Heart right ventricle (tissue), 16 donors: ENCODE measurements at regions of chr21 and their contacts with region 1.

Region 1: DNA sequence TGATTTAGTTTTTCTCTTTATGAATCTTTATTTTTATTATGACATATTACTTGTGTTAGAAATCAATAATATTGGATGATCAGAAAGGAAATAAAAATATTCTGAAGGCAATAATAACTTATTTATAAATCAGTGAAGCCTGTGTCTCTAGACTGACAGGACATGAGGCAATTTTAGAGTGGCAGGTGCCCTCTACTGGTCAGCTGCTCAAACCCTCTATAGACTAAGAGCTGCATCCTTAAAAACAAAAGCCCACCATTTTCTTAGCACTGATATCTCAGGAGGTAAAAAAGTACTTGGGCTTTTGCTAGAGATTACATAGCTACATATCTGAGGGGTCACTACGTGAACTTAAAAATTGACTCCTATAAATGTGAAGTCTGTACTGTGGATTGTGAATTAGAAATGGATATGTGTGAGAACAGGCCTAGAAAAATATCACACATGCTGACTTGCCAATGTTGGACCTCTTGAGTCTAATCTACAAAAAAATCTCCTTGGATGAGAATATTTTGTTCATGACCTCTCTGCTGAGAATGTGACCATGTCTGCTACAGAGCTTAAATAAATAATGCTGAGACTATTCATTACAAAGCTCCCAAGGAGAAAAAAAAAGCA is 597.9 kb upstream of the ADAMTS5 start:
- DNase-seq: peak; percentile 17 to 43
- ATAC-seq: peak in 7 of 8 donors; percentile 67 to 82 (median 76)
- H3K4me3 ChIP-seq: no peak overlapping the region
- H3K27ac ChIP-seq: no peak overlapping the region
- H3K4me1 ChIP-seq: peaks cover 0 to 5% (median under 1%) of the 10 kb centered on the region in 9 donors
- H3K27me3 ChIP-seq: no peaks in the 10 kb centered on the region
- CTCF ChIP-seq: peak; percentile 54 to 87 (median 82)

Region 2: DNA sequence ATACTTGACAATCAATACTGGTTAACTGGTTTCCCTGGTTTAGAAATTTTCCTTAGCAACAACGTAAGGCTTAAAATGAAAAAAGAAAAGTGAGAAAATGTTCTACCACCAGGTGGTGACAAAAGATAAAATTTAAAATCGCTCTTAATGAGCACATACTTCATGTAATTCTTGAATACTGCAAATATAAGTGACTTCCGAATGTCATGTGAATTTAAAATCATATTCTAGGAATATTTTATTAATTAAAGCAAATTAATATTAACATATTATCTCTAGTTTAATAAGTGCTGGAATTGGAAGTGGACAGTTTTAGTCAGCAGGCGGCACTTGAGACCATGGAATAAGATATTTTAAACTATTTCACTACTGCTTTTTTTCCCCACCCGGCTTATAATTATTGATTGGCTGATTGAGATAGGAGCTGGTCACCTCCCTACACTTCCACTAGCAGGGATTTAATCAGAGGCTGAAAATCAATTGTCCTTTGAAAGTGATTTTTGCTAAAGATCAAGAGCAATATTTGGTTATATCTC is 714.6 kb before region 1 on chr21:
- intact Hi-C with region 1: loop called in 7 of 10 experiments (anchors 2 to 10 kb)
- DNase-seq: no peak
- ATAC-seq: no peak
- H3K4me3 ChIP-seq: peak overlapping the region in 6 of 10 donors; percentile 4 to 18 (median 8)
- H3K27ac ChIP-seq: no peak overlapping the region
- H3K4me1 ChIP-seq: peaks cover 0 to 33% (median 21%) of the 10 kb centered on the region in 9 donors
- H3K27me3 ChIP-seq: peaks cover 0 to 31% (median 0%) of the 10 kb centered on the region in 7 donors
- CTCF ChIP-seq: peak; percentile 56 to 84 (median 71)

Region 3: DNA sequence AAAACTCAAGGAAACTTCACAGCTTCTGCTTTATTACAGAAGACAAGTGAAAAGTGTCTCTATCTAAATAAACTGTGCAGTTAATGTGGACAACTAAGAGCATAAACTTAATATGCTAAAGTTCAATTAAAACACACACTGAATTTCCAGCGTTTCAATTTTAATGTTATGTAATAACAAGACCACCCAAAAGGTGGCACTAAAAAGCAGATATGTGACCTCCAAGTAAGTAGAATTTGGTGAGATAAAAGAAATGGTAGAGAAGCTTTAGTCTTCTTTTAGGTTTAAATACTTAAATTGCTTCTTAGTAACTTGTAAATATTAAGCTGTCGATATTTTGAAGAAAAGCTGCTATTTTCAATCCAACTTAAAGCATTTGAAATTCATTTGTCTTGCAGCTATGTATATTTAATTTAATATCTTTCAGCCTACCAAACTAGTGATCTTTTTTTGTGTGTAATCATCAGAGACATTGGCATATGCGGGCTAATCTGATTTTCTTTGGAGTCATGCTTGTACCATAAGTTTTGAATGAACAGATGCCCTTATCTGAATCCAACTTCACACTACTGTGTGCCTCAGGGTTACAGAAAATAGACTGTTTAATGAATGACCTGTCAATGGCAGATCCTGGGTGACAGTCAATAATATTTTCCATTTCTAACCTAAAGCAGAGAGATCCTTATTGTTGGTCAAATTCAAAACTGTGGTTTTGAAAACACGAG is 683.1 kb before region 1 on chr21:
- intact Hi-C with region 1: loop called in 6 of 10 experiments (anchors 2 to 10 kb)
- DNase-seq: no peak
- ATAC-seq: no peak
- H3K4me3 ChIP-seq: no peak overlapping the region
- H3K27ac ChIP-seq: no peak overlapping the region
- H3K4me1 ChIP-seq: no peaks in the 10 kb centered on the region
- H3K27me3 ChIP-seq: no peaks in the 10 kb centered on the region
- CTCF ChIP-seq: peak; percentile 15 to 61 (median 47)

Region 4: DNA sequence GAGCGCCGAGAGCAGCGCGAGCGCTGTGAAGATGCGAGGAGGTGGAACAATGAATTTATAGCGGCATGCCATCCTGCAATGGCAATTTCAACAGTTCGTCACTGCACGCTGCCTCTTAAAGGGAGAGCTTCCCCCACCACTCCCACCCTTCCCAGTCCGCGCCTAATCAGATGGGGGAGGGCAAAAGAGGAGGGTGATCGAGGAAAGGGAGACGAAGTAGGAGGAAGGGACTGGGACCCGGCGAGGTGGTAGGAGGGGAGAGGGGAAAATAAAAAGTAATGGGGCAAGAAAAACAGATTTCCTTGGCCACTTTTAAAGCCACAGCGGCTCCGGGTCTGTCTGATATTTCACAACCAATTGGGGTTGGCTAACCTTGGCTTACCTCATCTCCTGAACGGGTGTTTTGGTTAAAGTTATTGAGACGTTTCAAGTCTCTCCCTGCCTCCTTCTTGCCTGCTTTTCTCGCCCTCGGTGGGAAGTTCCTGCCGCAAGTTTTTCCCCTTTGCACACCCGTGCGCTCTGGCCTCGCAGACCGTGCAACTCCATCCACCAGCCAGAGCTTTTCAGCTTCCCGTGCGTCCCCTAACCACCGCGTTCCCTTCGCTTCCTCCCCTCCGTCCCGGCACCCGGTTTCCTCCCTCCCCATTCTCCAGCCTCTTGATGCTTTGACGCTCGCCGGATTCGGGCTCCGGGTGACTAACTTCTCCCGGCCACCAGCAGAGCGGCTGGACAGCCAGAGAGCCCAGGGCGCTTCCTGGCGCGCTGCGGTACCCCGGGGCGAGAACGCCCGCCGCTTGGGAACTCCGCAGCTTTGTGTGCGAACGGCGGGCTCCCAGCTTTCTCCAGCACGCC is 597.5 kb before region 1 on chr21 and contains the start of gene ADAMTS5:
- intact Hi-C with region 1: loop called in 2 of 10 experiments (anchors 10 kb)
- DNase-seq: peak; percentile 35 to 55
- ATAC-seq: peak; percentile 19 to 70 (median 61)
- H3K4me3 ChIP-seq: peak within 1 kb of the TSS; percentile 53 to 76 (median 64)
- H3K27ac ChIP-seq: peak within 1 kb of the TSS; percentile 58 to 82 (median 74)
- H3K4me1 ChIP-seq: peaks cover 0 to 33% (median 15%) of the 10 kb centered on the region in 9 donors
- H3K27me3 ChIP-seq: peaks cover 0 to 62% (median 31%) of the 10 kb centered on the region in 7 donors
- CTCF ChIP-seq: no peak
- total RNA-seq, gene ADAMTS5: 1.6 to 7.1 (median 3.0) TPM

Region 5: DNA sequence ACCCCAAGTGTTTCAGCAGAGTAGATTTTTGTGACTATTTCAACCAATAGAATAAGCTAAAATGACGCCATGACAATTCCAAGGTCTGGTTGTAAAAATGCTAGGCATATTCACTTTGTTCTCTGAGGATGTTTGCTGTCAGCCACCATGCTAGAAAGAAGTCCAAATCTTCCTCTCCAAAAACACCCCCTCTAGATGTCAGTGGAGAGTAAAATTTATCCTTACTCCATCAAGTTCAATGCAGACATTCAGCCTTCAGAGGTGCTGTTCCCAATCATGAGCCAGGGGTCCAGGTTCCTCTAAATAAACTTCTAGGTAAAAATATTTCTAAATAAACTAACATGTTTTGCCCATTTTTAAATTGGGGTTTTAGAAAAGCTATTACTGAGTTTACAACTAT is 202.5 kb before region 1 on chr21:
- intact Hi-C with region 1: loop called in 7 of 10 experiments (anchors 2 to 10 kb)
- DNase-seq: no peak
- ATAC-seq: no peak
- H3K4me3 ChIP-seq: no peak overlapping the region
- H3K27ac ChIP-seq: no peak overlapping the region
- H3K4me1 ChIP-seq: no peaks in the 10 kb centered on the region
- H3K27me3 ChIP-seq: no peaks in the 10 kb centered on the region
- CTCF ChIP-seq: peak in 8 of 9 donors; percentile 17 to 55 (median 29)

Region 6: GRCh38 chr21:27694667-27695066 is 129.9 kb after region 1 on chr21:
- intact Hi-C with region 1: loop called in 1 of 10 experiments (anchors 5 kb)
- DNase-seq: no peak
- ATAC-seq: no peak
- H3K4me3 ChIP-seq: no peak overlapping the region
- H3K27ac ChIP-seq: no peak overlapping the region
- H3K4me1 ChIP-seq: no peaks in the 10 kb centered on the region
- H3K27me3 ChIP-seq: no peaks in the 10 kb centered on the region
- CTCF ChIP-seq: no peak